ENCODE measurements at regions of chr12 and their contacts with region 1.

Region 1: GRCh38 chr12:107891972-107892371 is 117.5 kb downstream of the ASCL4 start:
- DNase-seq: peak; percentile 24 to 53 (median 34)
- ATAC-seq: peak; percentile 91
- H3K4me3 ChIP-seq: no peak overlapping the region
- H3K27ac ChIP-seq: no peak overlapping the region
- H3K4me1 ChIP-seq: no peaks in the 10 kb centered on the region; a peak in 1 of 5 replicates
- H3K27me3 ChIP-seq: peaks cover 0 to 12% of the 10 kb centered on the region in 2 experiments; a peak in 2 of 5 replicates
- CTCF ChIP-seq: peak; percentile 73 to 77 (median 74)
- EP300 ChIP-seq: no peak
- POLR2A ChIP-seq: no peak
- RAD21 ChIP-seq: peak in 1 of 2 experiments; percentile 67; a peak in 2 of 4 replicates

Region 2: GRCh38 chr12:107912421-107913004 is 20.5 kb after region 1 on chr12:
- CTCF ChIA-PET with region 1: interaction called, 10 read pairs
- POLR2A ChIA-PET with region 1: no interaction called
- in situ Hi-C with region 1: no loop called
- intact Hi-C with region 1: loop called (anchors 1 kb)
- DNase-seq: peak; percentile 83 to 89 (median 86)
- ATAC-seq: peak; percentile 95
- H3K4me3 ChIP-seq: peak overlapping the region; percentile 48
- H3K27ac ChIP-seq: no peak overlapping the region
- H3K4me1 ChIP-seq: peaks cover 8 to 10% of the 10 kb centered on the region in 2 experiments; a peak in 4 of 5 replicates
- H3K27me3 ChIP-seq: peaks cover 21 to 27% of the 10 kb centered on the region in 2 experiments; a peak in 4 of 5 replicates
- CTCF ChIP-seq: peak; percentile 93 to 99 (median 94)
- EP300 ChIP-seq: no peak
- POLR2A ChIP-seq: no peak
- RAD21 ChIP-seq: peak; percentile 30 to 50; a peak in 3 of 4 replicates

Region 3: DNA sequence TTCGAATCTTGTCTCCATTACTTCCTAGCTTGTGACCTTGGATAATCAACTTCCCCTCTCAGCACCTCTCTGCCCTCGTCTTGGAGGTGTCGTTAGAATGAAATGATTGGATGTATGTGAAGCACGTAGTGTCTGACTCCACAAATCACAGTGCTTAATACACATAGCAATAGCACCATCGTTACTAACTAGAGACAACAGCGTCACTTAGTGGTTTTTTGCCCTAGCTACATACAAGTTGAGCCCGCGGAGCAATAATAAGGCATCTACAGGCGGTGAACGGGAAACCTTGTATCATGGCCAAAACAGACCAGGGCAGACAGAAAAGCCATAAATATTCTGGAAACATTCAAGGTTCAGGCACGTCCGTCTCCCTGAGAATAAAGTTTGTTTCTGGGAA is 37.5 kb after region 1 on chr12:
- CTCF ChIA-PET with region 1: interaction called, 6 read pairs
- POLR2A ChIA-PET with region 1: no interaction called
- in situ Hi-C with region 1: no loop called
- intact Hi-C with region 1: loop called (anchors 2 kb)
- DNase-seq: peak; percentile 31 to 62 (median 43)
- ATAC-seq: peak; percentile 99
- H3K4me3 ChIP-seq: no peak overlapping the region
- H3K27ac ChIP-seq: no peak overlapping the region
- H3K4me1 ChIP-seq: no peaks in the 10 kb centered on the region
- H3K27me3 ChIP-seq: peaks cover 5 to 19% of the 10 kb centered on the region in 2 experiments; a peak in 3 of 5 replicates
- CTCF ChIP-seq: peak; percentile 73 to 80 (median 80)
- EP300 ChIP-seq: no peak
- POLR2A ChIP-seq: no peak
- RAD21 ChIP-seq: peak; percentile 41 to 73

Region 4: GRCh38 chr12:107948391-107948945 is 56.5 kb after region 1 on chr12:
- CTCF ChIA-PET with region 1: no interaction called
- POLR2A ChIA-PET with region 1: no interaction called
- in situ Hi-C with region 1: no loop called
- intact Hi-C with region 1: no loop called
- DNase-seq: no peak
- ATAC-seq: no peak
- H3K4me3 ChIP-seq: no peak overlapping the region
- H3K27ac ChIP-seq: no peak overlapping the region
- H3K4me1 ChIP-seq: no peaks in the 10 kb centered on the region; a peak in 1 of 5 replicates
- H3K27me3 ChIP-seq: peaks cover 15 to 17% of the 10 kb centered on the region in 2 experiments
- CTCF ChIP-seq: no peak
- EP300 ChIP-seq: no peak
- POLR2A ChIP-seq: no peak
- RAD21 ChIP-seq: no peak

Region 5: GRCh38 chr12:108394196-108394595 is 502.2 kb after region 1 on chr12:
- CTCF ChIA-PET with region 1: no interaction called
- POLR2A ChIA-PET with region 1: no interaction called
- in situ Hi-C with region 1: no loop called
- intact Hi-C with region 1: no loop called
- DNase-seq: no peak
- ATAC-seq: no peak
- H3K4me3 ChIP-seq: no peak overlapping the region
- H3K27ac ChIP-seq: no peak overlapping the region
- H3K4me1 ChIP-seq: no peaks in the 10 kb centered on the region
- H3K27me3 ChIP-seq: peaks cover 0 to 16% of the 10 kb centered on the region in 2 experiments; a peak in 3 of 5 replicates
- CTCF ChIP-seq: no peak
- EP300 ChIP-seq: no peak
- POLR2A ChIP-seq: no peak
- RAD21 ChIP-seq: no peak